HCT116 (cell line): ENCODE measurements at regions of chr6 and their contacts with region 1.

Region 1: DNA sequence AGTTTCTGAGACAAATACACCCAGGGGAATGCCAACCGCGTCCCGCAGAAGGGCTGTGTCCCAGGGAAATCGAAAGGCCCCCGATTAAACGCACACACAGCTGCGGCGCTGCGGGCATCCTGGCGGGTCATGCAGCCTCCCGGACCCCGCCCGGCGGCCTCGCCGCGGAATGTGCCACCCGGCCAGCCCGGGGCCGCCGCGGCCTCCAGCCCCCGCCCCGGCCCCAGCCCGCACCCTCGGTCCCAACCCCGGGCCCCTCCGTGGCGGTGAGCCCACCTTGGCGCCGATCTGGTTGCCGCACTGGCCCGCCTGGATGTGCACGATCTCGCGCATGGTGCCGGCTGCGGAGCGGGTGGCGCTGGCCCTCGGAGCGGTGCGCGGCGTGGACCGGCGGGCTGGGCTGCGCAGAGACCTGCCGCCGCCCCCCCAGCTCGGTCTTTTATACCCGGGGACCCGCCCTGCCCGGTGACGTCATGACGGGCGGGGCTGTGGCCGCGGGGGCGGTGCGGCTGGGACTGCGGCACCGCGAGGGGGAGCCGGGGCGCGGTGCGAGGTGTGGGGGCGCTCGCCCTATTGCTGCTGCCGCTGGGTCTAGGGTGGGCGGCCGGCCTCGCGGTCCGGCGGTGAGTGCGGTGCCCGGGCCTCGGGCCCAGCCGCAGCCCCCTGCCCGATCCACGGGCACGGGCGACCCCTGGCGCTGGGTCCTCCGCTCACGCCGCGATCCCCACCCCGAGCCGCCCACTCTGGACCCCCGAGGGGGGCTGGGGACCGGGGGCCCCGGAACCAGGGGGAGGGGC is at the start of gene TUBB2A:
- DNase-seq: peak; percentile 35
- ATAC-seq: peak; percentile 77
- H3K4me3 ChIP-seq: peak within 1 kb of the TSS; percentile 68 to 87
- H3K27ac ChIP-seq: peak within 1 kb of the TSS; percentile 68; the same call in 1 of the 2 replicates
- H3K4me1 ChIP-seq: peaks cover 7 to 46% of the 10 kb centered on the region in 2 experiments; a peak in 3 of 4 replicates
- H3K27me3 ChIP-seq: no peaks in the 10 kb centered on the region
- CTCF ChIP-seq: peak; percentile 41 to 55 (median 49)
- POLR2A ChIP-seq: peak; percentile 97
- RAD21 ChIP-seq: peak; percentile 39; the same call in 1 of the 2 replicates
- total RNA-seq, gene TUBB2A: 49.9 TPM

Region 2: GRCh38 chr6:3209114-3210023 is 52.0 kb after region 1 on chr6:
- CTCF ChIA-PET with region 1: interaction called, 3 read pairs
- POLR2A ChIA-PET with region 1: interaction called, 4 read pairs
- RAD21 ChIA-PET with region 1: no interaction called
- intact Hi-C with region 1: loop called (anchors 2 kb)
- DNase-seq: peak; percentile 96
- ATAC-seq: peak; percentile 98
- H3K4me3 ChIP-seq: peak overlapping the region; percentile 33 to 49
- H3K27ac ChIP-seq: peak overlapping the region; percentile 61
- H3K4me1 ChIP-seq: peaks cover 12 to 34% of the 10 kb centered on the region in 2 experiments
- H3K27me3 ChIP-seq: no peaks in the 10 kb centered on the region
- CTCF ChIP-seq: peak in 2 of 3 experiments; percentile 20 to 55; a peak in 1 of 6 replicates
- POLR2A ChIP-seq: no peak
- RAD21 ChIP-seq: peak; percentile 81

Region 3: GRCh38 chr6:3251462-3252314 is 94.4 kb after region 1 on chr6:
- CTCF ChIA-PET with region 1: interaction called, 7 read pairs
- POLR2A ChIA-PET with region 1: interaction called, 14 read pairs
- RAD21 ChIA-PET with region 1: interaction called in 1 of 2 experiments, 3 read pairs
- intact Hi-C with region 1: loop called (anchors 2 kb)
- DNase-seq: peak; percentile 66
- ATAC-seq: peak; percentile 87
- H3K4me3 ChIP-seq: peak overlapping the region; percentile 12 to 18
- H3K27ac ChIP-seq: no peak overlapping the region
- H3K4me1 ChIP-seq: peaks cover 0 to 33% of the 10 kb centered on the region in 2 experiments; a peak in 2 of 4 replicates
- H3K27me3 ChIP-seq: no peaks in the 10 kb centered on the region
- CTCF ChIP-seq: peak; percentile 94 to 97 (median 96)
- POLR2A ChIP-seq: no peak
- RAD21 ChIP-seq: peak; percentile 88